MCF 10A (cell line): ENCODE measurements at regions of chr15 and their contacts with region 1.

Region 1: DNA sequence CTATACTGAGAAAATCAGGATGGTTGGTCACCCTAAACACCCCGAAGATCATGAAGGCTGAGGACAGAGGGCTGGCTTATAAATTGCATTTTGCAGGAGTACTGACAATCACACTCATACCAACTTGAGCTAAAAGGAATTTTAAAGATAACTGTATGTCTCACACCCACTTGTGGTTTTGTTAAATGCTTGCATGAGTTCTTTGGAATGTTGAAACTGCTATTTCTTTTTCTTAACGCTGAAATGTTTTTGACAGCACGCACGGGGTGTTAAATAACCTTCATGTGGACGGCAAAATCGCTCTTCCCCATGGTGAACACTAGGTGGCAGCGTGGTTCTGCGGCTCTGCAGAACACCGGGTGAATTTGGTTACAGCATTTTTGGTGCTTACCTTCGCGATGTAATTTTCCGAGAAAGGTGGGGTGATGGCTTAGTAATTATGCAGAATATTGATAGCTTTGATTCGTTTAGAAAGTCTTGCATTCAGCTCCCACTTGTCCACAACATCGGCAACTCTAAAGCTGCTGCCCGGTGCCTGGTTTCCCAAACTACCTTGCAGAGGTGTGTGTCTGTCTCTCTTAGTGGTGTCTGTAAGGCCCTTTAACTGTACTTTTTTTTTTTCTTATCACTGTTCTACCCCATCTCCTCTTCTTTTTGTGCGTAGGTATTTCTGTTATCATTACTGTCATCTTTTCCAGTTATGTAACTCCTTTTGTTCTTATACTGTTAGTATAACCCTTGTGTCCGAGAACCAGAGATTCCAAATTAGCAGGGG is 51.7 kb downstream of the ARNT2 start:
- DNase-seq: peak; percentile 77
- H3K4me3 Mint-ChIP-seq: no peak overlapping the region
- H3K27ac Mint-ChIP-seq: no peak overlapping the region
- H3K4me1 Mint-ChIP-seq: peaks cover 13% of the 10 kb centered on the region
- H3K27me3 Mint-ChIP-seq: no peaks in the 10 kb centered on the region
- CTCF ChIP-seq: peak; percentile 77

Region 2: DNA sequence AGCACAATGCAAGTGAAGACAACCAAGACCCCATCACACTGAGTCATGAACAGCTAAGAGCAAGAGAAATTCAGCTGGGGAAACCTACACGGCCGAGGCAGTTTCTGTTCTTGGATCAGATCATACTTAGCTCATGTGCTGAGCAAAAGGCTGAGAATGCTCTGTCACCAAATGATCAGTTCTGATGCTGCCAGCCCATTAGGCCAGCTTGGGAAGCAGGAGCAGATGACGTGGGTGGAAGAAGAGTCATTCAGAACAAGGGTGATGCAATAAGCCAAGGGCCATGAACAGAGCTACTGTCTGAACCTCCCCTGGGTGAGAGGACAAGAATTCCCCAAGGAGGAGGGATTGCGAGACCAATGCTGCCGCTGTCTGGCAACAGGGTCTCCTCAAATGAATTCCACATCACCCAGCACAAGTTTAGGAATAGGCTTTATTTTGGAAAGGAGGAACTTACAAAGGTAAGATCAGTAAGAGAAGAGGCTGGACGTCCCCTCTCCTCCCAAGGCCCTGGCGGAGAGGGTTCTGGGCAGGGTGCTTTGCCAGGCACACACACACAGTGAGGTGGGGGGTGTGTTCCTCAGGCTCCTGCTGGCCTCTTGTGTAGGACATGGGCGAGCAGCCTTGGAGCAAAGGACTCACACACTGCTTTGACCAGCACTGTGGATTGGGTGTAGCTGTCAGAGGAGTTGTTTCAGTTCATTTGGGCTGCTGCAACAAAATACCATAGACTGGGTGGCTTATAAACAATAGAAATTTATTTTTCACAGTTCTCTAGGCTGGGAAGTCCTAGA is 138.3 kb before region 1 on chr15:
- CTCF ChIA-PET with region 1: no interaction called
- POLR2A ChIA-PET with region 1: no interaction called
- intact Hi-C with region 1: no loop called
- DNase-seq: peak; percentile 84
- H3K4me3 Mint-ChIP-seq: no peak overlapping the region
- H3K27ac Mint-ChIP-seq: peak overlapping the region; percentile 62
- H3K4me1 Mint-ChIP-seq: peaks cover 12% of the 10 kb centered on the region
- H3K27me3 Mint-ChIP-seq: no peaks in the 10 kb centered on the region
- CTCF ChIP-seq: no peak

Region 3: DNA sequence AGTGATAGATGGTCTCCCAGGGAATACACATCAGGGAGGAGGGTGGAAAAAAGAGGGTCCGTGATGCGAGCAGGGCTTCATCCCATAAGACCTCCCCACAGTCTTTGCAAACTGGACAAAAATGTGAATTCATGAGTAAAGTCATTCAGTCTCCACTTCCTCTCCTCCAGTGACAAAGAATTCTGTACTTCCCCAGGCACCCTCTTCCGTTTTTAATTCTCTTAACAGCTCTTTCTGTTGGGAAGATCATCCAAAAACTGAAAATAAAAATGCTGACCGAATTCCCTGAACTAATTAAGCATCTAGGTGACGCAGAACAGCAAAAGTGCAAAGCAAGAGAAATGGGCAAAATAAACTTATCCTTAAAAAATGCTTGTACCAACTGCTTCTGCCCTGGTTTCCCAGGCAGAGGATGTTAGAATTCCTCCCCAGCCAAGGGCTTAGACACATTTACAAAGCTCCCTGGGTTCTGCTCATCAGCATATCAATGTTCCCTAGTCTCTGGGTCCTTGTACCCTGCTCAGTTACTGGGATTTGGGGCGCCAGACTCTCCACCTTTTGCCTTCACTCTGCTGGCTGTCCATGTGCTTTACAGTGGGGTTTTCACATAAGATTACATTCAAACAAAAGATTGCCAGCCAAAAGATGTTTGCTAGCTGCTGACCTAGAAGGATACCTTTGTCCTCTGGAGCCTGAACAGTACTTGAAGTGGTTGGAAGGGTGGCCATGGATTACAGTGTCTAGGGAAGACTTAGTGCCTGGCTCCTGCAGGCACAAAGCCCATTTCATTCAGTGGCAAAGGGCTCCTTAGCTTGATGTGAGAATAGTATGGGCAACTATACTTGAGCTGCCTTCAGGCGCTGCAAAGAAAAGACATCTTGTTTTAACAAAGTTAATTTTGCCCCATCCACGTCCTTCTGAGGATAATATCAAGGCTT is 17.7 kb after region 1 on chr15:
- CTCF ChIA-PET with region 1: interaction called, 12 read pairs
- POLR2A ChIA-PET with region 1: no interaction called
- intact Hi-C with region 1: no loop called
- DNase-seq: no peak
- H3K4me3 Mint-ChIP-seq: no peak overlapping the region
- H3K27ac Mint-ChIP-seq: no peak overlapping the region
- H3K4me1 Mint-ChIP-seq: no peaks in the 10 kb centered on the region
- H3K27me3 Mint-ChIP-seq: no peaks in the 10 kb centered on the region
- CTCF ChIP-seq: no peak

Region 4: DNA sequence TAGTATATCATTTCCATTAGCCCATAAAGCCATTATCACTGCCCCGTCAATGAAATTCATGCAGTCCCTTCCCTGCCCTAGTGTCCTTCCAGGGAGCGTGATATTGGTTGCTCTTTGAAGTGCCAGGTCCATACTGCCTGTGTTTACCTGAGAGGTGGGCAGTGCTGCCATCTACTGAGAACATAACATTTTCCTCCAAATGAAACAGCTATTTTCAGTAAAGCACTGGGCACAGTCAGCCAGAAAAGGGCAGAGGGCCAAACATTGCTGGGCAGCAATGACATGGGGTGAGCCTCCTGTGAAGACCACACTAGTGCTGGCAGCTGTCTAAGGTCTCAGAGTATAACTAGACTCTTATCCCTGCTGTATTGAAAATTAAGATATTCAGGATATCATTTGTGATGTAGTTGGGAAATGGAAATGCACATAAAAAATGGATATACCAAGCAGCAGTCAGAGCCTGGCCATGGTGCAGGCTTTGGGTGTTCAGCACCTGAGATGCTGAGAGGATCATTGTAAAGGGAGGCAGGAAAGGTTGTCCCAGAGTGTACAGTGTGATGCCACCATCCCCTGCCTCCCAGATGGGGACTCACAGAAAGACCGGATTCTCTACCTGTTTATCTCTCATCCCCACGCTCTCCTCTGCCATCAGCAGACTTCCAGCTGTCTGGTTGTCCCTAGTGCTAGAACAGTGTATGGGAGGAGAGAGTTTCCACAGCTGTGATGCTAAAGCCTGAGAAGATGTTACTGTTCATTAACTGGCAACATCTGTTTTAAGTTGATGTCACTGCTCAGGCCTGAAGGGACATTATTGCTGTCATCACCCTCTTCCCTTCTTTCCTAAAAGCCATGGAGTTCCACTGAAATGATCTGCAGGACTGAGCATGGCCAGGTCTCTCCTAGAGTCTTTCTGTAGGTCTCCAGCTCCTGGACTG is 57.1 kb after region 1 on chr15:
- CTCF ChIA-PET with region 1: interaction called, 10 read pairs
- POLR2A ChIA-PET with region 1: no interaction called
- intact Hi-C with region 1: loop called (anchors 1 kb)
- DNase-seq: peak; percentile 28
- H3K4me3 Mint-ChIP-seq: no peak overlapping the region
- H3K27ac Mint-ChIP-seq: no peak overlapping the region
- H3K4me1 Mint-ChIP-seq: peaks cover 9% of the 10 kb centered on the region
- H3K27me3 Mint-ChIP-seq: no peaks in the 10 kb centered on the region
- CTCF ChIP-seq: peak; percentile 29

Region 5: GRCh38 chr15:80695104-80695910 is 239.5 kb after region 1 on chr15 and contains the start of gene ABHD17C:
- CTCF ChIA-PET with region 1: no interaction called
- POLR2A ChIA-PET with region 1: interaction called, 3 read pairs
- intact Hi-C with region 1: loop called (anchors 5 kb)
- DNase-seq: peak; percentile 65
- H3K4me3 Mint-ChIP-seq: peak within 1 kb of the TSS; percentile 92
- H3K27ac Mint-ChIP-seq: peak within 1 kb of the TSS; percentile 73
- H3K4me1 Mint-ChIP-seq: peaks cover 39% of the 10 kb centered on the region
- H3K27me3 Mint-ChIP-seq: no peaks in the 10 kb centered on the region
- CTCF ChIP-seq: no peak
- total RNA-seq, gene ABHD17C: 10.1 and 11.9 TPM in 2 replicates

Region 6: GRCh38 chr15:80977627-80978036 is 521.8 kb after region 1 on chr15:
- CTCF ChIA-PET with region 1: interaction called, 75 read pairs
- POLR2A ChIA-PET with region 1: no interaction called
- intact Hi-C with region 1: no loop called
- DNase-seq: peak; percentile 30
- H3K4me3 Mint-ChIP-seq: no peak overlapping the region
- H3K27ac Mint-ChIP-seq: no peak overlapping the region
- H3K4me1 Mint-ChIP-seq: peaks cover 6% of the 10 kb centered on the region
- H3K27me3 Mint-ChIP-seq: no peaks in the 10 kb centered on the region
- CTCF ChIP-seq: no peak